ENCODE measurements at regions of chr19 and their contacts with region 1.

Region 1: DNA sequence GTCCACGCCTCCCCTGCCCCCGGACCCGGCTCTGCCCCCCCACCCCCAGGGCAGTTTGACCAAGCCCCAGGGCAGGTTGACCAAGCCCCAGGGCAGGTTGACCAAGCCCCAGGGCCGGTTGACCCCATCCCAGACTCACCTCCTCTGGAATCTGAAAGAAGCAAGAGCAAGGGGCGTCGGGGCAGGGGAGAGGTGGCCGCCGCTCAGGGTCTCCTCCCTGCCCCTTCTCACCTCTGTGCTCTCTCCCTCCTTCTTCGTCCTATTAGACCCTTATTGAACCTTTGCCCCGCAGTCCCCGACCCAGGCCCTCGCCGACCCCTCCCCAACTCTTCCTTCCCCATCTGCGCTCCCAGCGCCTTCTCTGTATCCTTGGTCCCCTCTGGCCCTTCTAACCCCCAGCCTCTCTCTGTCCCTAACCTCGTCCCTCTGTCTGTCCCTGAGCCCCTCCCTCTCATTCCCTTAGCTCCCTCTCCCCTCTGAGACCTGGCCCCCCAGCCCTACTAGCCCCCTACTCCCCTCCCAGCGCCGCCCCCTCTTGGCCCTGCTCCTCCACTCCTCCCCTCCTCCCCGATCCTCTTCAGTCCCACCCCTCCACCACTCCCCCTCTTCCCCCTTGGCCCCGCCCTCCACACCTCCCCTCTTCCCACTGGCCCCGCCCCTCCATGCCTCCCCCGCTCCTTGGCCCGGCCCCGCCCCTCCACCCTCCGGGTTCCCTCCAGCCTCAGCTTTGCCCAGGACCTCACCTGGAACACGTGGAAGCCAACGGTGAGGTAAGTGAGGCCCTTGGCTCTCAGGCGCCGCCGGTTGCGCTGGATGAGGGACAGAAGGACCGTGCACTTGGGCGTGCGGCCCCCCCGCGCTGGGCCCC is 7.6 kb downstream of the CAPN12 start:
- DNase-seq: peak; percentile 91 to 95
- H3K4me3 ChIP-seq: peak overlapping the region; percentile 54
- H3K4me3 Mint-ChIP-seq: peak overlapping the region; percentile 72
- H3K27ac Mint-ChIP-seq: peak overlapping the region; percentile 55
- H3K4me1 ChIP-seq: peaks cover 24% of the 10 kb centered on the region
- H3K4me1 Mint-ChIP-seq: peaks cover 23% of the 10 kb centered on the region
- H3K27me3 ChIP-seq: no peaks in the 10 kb centered on the region
- H3K27me3 Mint-ChIP-seq: no peaks in the 10 kb centered on the region
- CTCF ChIP-seq: no peak

Region 2: DNA sequence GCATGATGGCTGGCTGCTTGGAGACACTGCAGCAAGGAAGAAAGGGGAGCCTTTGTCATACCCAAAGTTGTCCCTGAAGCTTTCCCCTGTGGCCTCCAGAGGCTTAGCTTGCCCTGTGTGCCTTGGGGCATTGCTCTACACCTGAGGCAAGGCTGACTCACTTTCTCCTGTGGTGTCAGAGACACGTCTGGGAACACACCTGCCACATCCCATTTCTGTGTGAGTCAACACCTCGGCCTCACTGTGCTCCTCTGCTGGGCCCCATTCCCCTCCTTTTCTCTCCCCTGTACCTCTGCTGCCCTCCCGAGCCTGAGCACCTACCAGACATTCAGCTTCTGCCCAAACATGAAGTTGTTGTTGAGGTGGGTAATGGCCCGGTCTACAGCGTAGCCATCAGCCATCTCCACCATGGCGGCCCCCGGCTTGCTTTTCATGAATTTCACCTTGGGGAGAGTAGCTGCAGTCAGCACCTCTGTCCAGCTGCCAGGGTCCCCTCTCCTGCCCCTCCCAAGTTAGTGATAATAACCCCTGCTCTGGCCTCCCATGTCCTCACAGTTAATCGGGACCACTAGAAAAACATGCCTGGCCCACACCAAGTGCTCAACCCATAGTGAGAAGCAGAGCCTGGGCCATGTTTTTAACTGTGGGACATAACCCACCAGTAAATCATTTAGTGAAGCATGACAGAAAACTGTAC is 102.1 kb after region 1 on chr19:
- CTCF ChIA-PET with region 1: no interaction called
- POLR2A ChIA-PET with region 1: interaction called, 4 read pairs
- intact Hi-C with region 1: loop called (anchors 5 kb)
- DNase-seq: peak; percentile 59 to 80
- H3K4me3 ChIP-seq: no peak overlapping the region
- H3K4me3 Mint-ChIP-seq: peak overlapping the region; percentile 12
- H3K27ac Mint-ChIP-seq: peak overlapping the region; percentile 65
- H3K4me1 ChIP-seq: peaks cover 32% of the 10 kb centered on the region
- H3K4me1 Mint-ChIP-seq: peaks cover 25% of the 10 kb centered on the region
- H3K27me3 ChIP-seq: no peaks in the 10 kb centered on the region
- H3K27me3 Mint-ChIP-seq: no peaks in the 10 kb centered on the region
- CTCF ChIP-seq: peak in 1 of 2 experiments; percentile 13

Region 3: DNA sequence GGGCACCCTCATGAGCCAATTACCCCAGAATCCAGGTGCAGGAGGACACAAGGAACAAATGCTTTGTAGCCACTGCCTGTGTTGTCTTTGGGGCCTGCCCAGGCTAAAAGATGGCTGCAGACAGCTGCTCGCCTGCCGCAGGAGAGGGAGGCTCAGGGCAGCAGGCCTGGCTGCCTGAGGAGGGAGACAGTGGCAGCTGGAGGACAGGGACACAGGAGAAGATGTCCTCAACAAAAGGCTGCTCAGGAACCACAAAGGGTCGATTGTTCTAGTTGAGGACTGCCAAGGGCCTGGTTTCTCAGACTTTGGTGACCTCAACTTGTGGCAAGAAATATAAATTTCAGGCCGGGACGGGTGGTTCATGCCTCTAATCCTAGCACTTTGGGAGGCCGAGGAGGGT is 155.1 kb after region 1 on chr19:
- CTCF ChIA-PET with region 1: no interaction called
- POLR2A ChIA-PET with region 1: no interaction called
- intact Hi-C with region 1: loop called (anchors 2 kb)
- DNase-seq: no peak
- H3K4me3 ChIP-seq: no peak overlapping the region
- H3K4me3 Mint-ChIP-seq: no peak overlapping the region
- H3K27ac Mint-ChIP-seq: no peak overlapping the region
- H3K4me1 ChIP-seq: peaks cover 6% of the 10 kb centered on the region; the same call in 1 of the 2 replicates
- H3K4me1 Mint-ChIP-seq: no peaks in the 10 kb centered on the region
- H3K27me3 ChIP-seq: no peaks in the 10 kb centered on the region
- H3K27me3 Mint-ChIP-seq: no peaks in the 10 kb centered on the region
- CTCF ChIP-seq: no peak

Measured in Caco-2 (cell line).